CD4-positive, alpha-beta memory T cell (primary cell): ENCODE measurements at regions of chr11 and their contacts with region 1.

Region 1: GRCh38 chr11:72040726-72041441 is 39.5 kb downstream of the NUMA1 start:
- DNase-seq: peak; percentile 83 to 92 (median 84)
- H3K4me3 ChIP-seq: peak overlapping the region; percentile 79 to 88
- H3K4me3 Mint-ChIP-seq: no peak overlapping the region
- H3K27ac ChIP-seq: peak overlapping the region; percentile 75
- H3K27ac Mint-ChIP-seq: no peak overlapping the region
- H3K4me1 ChIP-seq: peaks cover 64% of the 10 kb centered on the region
- H3K4me1 Mint-ChIP-seq: peaks cover 29 to 45% (median 38%) of the 10 kb centered on the region in 4 donors
- H3K27me3 ChIP-seq: no peaks in the 10 kb centered on the region
- H3K27me3 Mint-ChIP-seq: no peaks in the 10 kb centered on the region

Region 2: GRCh38 chr11:71998662-71999310 is 42.1 kb before region 1 on chr11 and contains the start of gene IL18BP:
- CTCF ChIA-PET with region 1: no interaction called
- POLR2A ChIA-PET with region 1: interaction called, 23 read pairs
- intact Hi-C with region 1: no loop called
- DNase-seq: peak; percentile 31 to 50 (median 46)
- H3K4me3 ChIP-seq: peak within 1 kb of the TSS; percentile 46 to 62
- H3K4me3 Mint-ChIP-seq: peak within 1 kb of the TSS; percentile 85 to 98 (median 92)
- H3K27ac ChIP-seq: peak within 1 kb of the TSS; percentile 65
- H3K27ac Mint-ChIP-seq: peak within 1 kb of the TSS; percentile 83 to 98 (median 97)
- H3K4me1 ChIP-seq: peaks cover 26% of the 10 kb centered on the region
- H3K4me1 Mint-ChIP-seq: peaks cover 19 to 40% (median 31%) of the 10 kb centered on the region in 4 donors
- H3K27me3 ChIP-seq: no peaks in the 10 kb centered on the region
- H3K27me3 Mint-ChIP-seq: no peaks in the 10 kb centered on the region
- total RNA-seq, gene IL18BP: 21.4 to 26.2 TPM

Region 3: GRCh38 chr11:72072348-72072747 is 31.5 kb after region 1 on chr11:
- CTCF ChIA-PET with region 1: interaction called, 8 read pairs
- POLR2A ChIA-PET with region 1: interaction called, 16 read pairs
- intact Hi-C with region 1: no loop called
- DNase-seq: no peak
- H3K4me3 ChIP-seq: no peak overlapping the region
- H3K4me3 Mint-ChIP-seq: peak overlapping the region in 1 of 8 donors; percentile 49
- H3K27ac ChIP-seq: no peak overlapping the region
- H3K27ac Mint-ChIP-seq: peak overlapping the region in 2 of 7 donors; percentile 57 to 64
- H3K4me1 ChIP-seq: peaks cover 26% of the 10 kb centered on the region
- H3K4me1 Mint-ChIP-seq: peaks cover 26 to 29% (median 26%) of the 10 kb centered on the region in 4 donors
- H3K27me3 ChIP-seq: no peaks in the 10 kb centered on the region
- H3K27me3 Mint-ChIP-seq: no peaks in the 10 kb centered on the region

Region 4: DNA sequence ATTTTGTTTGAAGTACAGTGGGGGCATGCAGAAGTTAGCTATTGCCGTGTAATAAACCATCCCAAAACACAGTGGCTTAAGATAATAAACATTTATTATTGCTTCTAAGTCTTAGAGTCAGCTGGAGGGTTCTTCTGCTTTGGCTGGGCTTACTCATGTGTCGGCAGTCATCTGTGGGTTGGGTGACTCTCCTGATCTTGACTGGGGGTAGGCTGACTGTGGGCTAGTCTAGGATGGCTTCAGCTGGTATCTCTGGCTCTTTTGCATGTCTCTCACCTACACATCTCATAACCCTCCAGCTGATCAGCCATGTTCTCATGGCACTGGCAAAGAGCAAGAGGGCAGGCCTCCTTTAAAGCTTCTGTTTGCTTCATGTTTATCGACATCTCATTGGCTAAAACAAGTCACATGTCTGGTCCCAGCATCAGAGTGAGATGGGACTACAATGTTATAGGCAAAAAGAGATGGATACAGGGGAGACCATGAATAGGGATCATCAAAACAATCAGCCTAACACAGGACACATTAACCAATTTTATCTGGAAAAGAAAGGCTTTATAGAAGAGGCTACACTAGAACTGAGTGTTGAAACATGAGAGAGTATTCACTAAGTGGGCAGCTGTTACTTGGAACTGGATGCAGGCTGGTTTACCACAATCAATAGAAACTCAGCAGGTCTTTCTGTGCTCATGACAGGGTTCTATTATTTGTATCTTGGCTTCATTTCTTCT is 44.9 kb after region 1 on chr11:
- CTCF ChIA-PET with region 1: interaction called, 52 read pairs
- POLR2A ChIA-PET with region 1: interaction called, 137 read pairs
- intact Hi-C with region 1: loop called (anchors 1 kb)
- DNase-seq: no peak
- H3K4me3 ChIP-seq: no peak overlapping the region
- H3K4me3 Mint-ChIP-seq: no peak overlapping the region
- H3K27ac ChIP-seq: no peak overlapping the region
- H3K27ac Mint-ChIP-seq: peak overlapping the region in 6 of 7 donors; percentile 25 to 91 (median 70)
- H3K4me1 ChIP-seq: peaks cover 9% of the 10 kb centered on the region
- H3K4me1 Mint-ChIP-seq: peaks cover 18 to 28% (median 18%) of the 10 kb centered on the region in 4 donors
- H3K27me3 ChIP-seq: no peaks in the 10 kb centered on the region
- H3K27me3 Mint-ChIP-seq: no peaks in the 10 kb centered on the region

Region 5: DNA sequence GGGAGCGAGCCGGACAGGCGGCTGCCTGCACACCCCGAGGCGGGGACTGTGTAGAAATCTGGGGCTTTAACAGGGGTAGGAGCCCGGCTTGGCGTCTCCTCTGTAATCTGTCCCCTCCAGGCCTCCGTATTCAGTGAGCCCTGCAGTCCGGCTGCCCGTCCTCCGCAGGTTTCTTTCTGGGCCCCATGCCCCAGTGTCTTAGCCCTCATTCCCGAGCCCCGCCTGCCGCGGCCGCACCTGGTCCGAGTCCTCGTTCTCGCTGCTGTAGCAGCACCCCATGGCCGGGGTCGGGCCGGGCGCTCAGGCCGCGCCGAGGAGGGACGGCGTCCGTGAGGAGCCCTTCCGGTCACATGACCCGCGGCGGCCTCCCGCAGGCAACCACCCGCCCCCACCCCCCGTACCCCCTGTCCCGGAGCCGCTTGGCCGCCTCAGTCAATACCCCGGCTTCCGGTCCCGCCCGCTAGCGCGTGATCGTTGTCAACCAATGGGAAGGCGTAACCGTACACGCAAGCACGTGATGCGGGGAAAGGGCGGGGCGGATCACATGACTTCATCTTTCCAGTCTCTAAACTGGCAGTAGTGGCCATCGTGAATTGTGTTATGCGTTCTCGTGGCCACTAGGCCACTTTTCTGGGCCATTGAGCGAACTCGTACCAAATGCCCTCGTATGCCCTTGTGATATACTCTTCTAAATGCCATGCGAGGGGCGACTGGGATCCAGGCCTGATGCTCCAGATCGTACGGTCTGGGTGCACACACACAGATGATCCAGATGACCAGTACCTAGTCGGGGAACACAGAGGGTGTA is 62.3 kb after region 1 on chr11 and contains the start of gene LAMTOR1:
- CTCF ChIA-PET with region 1: interaction called, 4 read pairs
- POLR2A ChIA-PET with region 1: interaction called, 58 read pairs
- intact Hi-C with region 1: loop called (anchors 1 kb)
- DNase-seq: peak; percentile 94 to 99 (median 95)
- H3K4me3 ChIP-seq: peak within 1 kb of the TSS; percentile 75 to 93
- H3K4me3 Mint-ChIP-seq: peak within 1 kb of the TSS; percentile 80 to 95 (median 86)
- H3K27ac ChIP-seq: peak within 1 kb of the TSS; percentile 90
- H3K27ac Mint-ChIP-seq: peak within 1 kb of the TSS; percentile 89 to 95 (median 95)
- H3K4me1 ChIP-seq: peaks cover 32% of the 10 kb centered on the region
- H3K4me1 Mint-ChIP-seq: peaks cover 28 to 47% (median 38%) of the 10 kb centered on the region in 4 donors
- H3K27me3 ChIP-seq: no peaks in the 10 kb centered on the region
- H3K27me3 Mint-ChIP-seq: no peaks in the 10 kb centered on the region
- total RNA-seq, gene LAMTOR1: 66.8 to 68.6 TPM

Region 6: GRCh38 chr11:72141066-72141465 is 100.2 kb after region 1 on chr11:
- CTCF ChIA-PET with region 1: interaction called, 25 read pairs
- POLR2A ChIA-PET with region 1: interaction called, 5 read pairs
- intact Hi-C with region 1: no loop called
- DNase-seq: no peak
- H3K4me3 ChIP-seq: no peak overlapping the region
- H3K4me3 Mint-ChIP-seq: no peak overlapping the region
- H3K27ac ChIP-seq: no peak overlapping the region
- H3K27ac Mint-ChIP-seq: peak overlapping the region in 1 of 7 donors; percentile 13
- H3K4me1 ChIP-seq: no peaks in the 10 kb centered on the region
- H3K4me1 Mint-ChIP-seq: peaks cover 2 to 14% (median 6%) of the 10 kb centered on the region in 4 donors
- H3K27me3 ChIP-seq: no peaks in the 10 kb centered on the region
- H3K27me3 Mint-ChIP-seq: peaks cover 0 to 6% of the 10 kb centered on the region in 2 donors

Region 7: GRCh38 chr11:72430741-72431570 is 390.1 kb after region 1 on chr11:
- CTCF ChIA-PET with region 1: no interaction called
- POLR2A ChIA-PET with region 1: no interaction called
- intact Hi-C with region 1: loop called (anchors 1 kb)
- DNase-seq: peak in 4 of 5 donors; percentile 30 to 46 (median 40)
- H3K4me3 ChIP-seq: no peak overlapping the region
- H3K4me3 Mint-ChIP-seq: peak overlapping the region in 7 of 8 donors; percentile 0 to 74 (median 28)
- H3K27ac ChIP-seq: no peak overlapping the region
- H3K27ac Mint-ChIP-seq: peak overlapping the region in 5 of 7 donors; percentile 28 to 64 (median 46)
- H3K4me1 ChIP-seq: peaks cover 26% of the 10 kb centered on the region
- H3K4me1 Mint-ChIP-seq: peaks cover 17 to 42% (median 35%) of the 10 kb centered on the region in 4 donors
- H3K27me3 ChIP-seq: no peaks in the 10 kb centered on the region
- H3K27me3 Mint-ChIP-seq: peaks cover 0 to 1% of the 10 kb centered on the region in 2 donors